Calu3 (cell line): ENCODE measurements at regions of chr12 and their contacts with region 1.

Region 1: DNA sequence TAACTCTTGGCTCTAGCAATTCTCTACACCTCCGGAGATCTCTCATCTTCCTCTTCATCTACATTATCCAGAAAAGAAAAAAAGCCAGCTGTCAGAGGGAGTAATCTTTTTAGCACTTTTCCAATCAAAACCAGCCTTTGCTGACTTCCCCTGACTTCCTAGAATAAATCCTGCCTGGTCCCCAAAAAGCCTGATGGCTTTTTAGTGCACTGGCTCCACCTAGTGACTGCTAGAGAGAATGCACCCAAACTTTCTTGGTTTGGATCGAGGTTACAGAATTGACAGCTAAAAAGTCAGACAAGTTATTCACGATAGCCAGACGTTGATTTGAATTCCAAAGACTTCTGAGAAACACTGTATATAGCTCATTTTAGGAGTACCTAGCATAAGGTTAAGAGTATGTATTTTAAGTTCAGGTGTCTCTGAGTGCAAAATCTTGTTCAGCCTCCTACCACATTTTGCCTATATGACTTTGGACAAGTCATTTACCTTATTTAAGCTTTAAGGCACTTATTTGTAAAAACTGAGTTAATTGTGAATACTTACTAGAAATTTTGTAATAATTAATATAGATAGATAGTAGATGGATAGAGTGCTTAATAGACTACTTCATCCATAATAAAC is 185.7 kb upstream of the GRIN2B start:
- DNase-seq: peak; percentile 58
- H3K4me3 Mint-ChIP-seq: no peak overlapping the region
- H3K27ac Mint-ChIP-seq: no peak overlapping the region
- H3K4me1 Mint-ChIP-seq: no peaks in the 10 kb centered on the region
- H3K27me3 Mint-ChIP-seq: peaks cover 31% of the 10 kb centered on the region
- CTCF ChIP-seq: peak; percentile 85

Region 2: DNA sequence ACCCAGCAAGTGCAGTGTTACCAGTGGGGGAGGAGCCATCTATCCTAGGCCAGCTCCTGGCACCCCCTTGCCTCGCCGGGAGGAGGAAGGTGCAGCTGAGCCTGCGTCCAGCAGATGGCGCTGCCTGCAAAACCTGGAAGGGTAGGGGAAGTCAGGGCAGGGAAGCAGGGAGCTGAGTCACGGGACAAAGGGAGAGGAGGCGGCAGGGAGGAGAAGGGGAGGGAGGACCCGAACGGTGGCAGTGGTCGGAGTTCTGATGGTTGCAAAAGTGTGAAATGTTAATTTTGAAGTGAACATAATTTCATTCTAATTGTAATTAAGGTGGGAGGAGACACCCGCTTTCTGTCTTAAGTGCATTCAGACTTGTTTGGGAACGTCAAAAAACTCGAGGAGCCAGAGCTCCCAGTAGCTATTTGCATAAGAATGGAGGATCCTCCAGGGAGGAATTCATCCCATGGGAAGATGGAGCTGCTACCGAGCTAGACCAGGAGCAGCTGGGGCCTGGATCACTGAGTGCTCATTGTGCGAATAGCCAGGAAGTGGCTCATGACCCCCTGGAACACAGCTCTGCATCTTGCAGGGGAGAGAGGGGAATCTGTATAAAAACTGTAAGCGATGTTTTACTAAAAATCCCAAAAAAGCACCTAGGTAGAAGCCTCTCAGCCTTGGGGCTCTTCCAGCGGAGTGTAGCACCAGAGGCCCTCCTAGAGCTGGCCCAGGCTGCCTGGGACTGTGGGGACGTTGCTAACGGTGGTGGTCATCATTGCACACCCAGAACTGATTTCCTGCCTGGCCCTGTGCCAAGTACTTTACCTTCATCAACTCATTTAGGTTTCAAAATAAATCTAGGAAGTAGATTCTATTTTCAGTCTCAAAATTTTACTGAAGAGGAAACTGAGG is 911.1 kb before region 1 on chr12:
- CTCF ChIA-PET with region 1: interaction called, 4 read pairs
- intact Hi-C with region 1: loop called (anchors 5 kb)
- DNase-seq: peak; percentile 94
- H3K4me3 Mint-ChIP-seq: peak overlapping the region; percentile 53
- H3K27ac Mint-ChIP-seq: peak overlapping the region; percentile 16
- H3K4me1 Mint-ChIP-seq: peaks cover 11% of the 10 kb centered on the region
- H3K27me3 Mint-ChIP-seq: no peaks in the 10 kb centered on the region
- CTCF ChIP-seq: peak; percentile 86

Region 3: DNA sequence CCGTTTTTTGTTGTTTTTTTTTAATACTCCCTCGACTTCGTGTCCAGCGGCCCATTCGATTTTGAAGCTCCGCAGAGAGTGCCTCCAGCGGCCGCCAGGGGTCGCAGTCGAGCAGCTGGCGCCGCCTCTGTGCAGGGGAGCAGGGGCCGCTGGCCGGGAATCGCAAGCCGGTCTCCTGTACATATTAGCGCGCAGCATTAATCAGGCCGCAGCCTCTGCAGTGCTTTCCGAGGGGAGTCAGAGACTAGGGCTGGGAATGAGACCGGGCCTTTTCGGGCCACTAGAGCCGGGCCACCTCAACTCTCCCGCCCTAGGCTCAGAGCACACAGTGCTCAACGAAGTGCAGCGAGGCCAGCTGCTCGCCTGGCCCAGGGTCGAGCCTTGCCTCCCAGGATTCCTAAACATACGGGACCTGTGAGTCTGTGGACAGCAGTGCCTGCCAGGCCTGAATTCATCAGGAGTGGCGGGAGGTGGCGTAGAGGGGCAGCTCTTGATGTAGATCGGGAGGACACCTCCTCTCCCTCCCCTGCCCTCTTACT is 888.8 kb before region 1 on chr12:
- CTCF ChIA-PET with region 1: no interaction called
- intact Hi-C with region 1: loop called (anchors 5 kb)
- DNase-seq: peak; percentile 84
- H3K4me3 Mint-ChIP-seq: no peak overlapping the region
- H3K27ac Mint-ChIP-seq: no peak overlapping the region
- H3K4me1 Mint-ChIP-seq: no peaks in the 10 kb centered on the region
- H3K27me3 Mint-ChIP-seq: peaks cover 30% of the 10 kb centered on the region
- CTCF ChIP-seq: peak; percentile 93

Region 4: GRCh38 chr12:13744561-13744960 is 422.6 kb before region 1 on chr12:
- CTCF ChIA-PET with region 1: no interaction called
- intact Hi-C with region 1: loop called (anchors 5 kb)
- DNase-seq: no peak
- H3K4me3 Mint-ChIP-seq: no peak overlapping the region
- H3K27ac Mint-ChIP-seq: no peak overlapping the region
- H3K4me1 Mint-ChIP-seq: no peaks in the 10 kb centered on the region
- H3K27me3 Mint-ChIP-seq: peaks cover 28% of the 10 kb centered on the region
- CTCF ChIP-seq: no peak

Region 5: DNA sequence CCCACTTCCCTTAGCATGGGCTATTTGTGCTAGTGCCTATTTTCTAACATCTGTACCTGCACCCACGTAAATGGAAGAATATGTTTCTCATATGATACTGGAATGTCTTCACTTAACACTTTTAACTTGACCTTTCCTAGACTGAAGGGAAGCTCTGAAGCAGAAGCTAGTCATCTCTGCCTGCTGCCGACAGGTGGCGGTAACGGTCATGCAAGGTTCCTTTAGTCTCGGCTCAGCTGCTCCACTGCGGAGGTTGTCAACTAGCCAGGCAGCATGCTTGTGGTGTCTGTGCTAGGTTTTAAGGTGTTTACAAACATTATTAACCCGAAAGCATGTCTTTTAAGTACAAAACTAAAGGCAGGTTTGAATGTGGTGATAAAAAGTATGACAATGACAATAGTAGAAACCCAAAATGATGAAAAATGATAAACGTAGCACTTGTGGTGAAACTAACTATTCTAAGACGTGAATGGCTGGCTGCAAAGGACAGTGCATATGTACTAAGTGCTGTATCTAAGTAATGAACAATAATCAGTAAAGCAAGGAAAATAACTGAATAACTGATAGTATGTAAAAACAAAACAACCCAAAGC is 302.9 kb before region 1 on chr12:
- CTCF ChIA-PET with region 1: interaction called, 4 read pairs
- intact Hi-C with region 1: loop called (anchors 5 kb)
- DNase-seq: peak; percentile 77
- H3K4me3 Mint-ChIP-seq: no peak overlapping the region
- H3K27ac Mint-ChIP-seq: no peak overlapping the region
- H3K4me1 Mint-ChIP-seq: no peaks in the 10 kb centered on the region
- H3K27me3 Mint-ChIP-seq: peaks cover 84% of the 10 kb centered on the region
- CTCF ChIP-seq: peak; percentile 81

Region 6: DNA sequence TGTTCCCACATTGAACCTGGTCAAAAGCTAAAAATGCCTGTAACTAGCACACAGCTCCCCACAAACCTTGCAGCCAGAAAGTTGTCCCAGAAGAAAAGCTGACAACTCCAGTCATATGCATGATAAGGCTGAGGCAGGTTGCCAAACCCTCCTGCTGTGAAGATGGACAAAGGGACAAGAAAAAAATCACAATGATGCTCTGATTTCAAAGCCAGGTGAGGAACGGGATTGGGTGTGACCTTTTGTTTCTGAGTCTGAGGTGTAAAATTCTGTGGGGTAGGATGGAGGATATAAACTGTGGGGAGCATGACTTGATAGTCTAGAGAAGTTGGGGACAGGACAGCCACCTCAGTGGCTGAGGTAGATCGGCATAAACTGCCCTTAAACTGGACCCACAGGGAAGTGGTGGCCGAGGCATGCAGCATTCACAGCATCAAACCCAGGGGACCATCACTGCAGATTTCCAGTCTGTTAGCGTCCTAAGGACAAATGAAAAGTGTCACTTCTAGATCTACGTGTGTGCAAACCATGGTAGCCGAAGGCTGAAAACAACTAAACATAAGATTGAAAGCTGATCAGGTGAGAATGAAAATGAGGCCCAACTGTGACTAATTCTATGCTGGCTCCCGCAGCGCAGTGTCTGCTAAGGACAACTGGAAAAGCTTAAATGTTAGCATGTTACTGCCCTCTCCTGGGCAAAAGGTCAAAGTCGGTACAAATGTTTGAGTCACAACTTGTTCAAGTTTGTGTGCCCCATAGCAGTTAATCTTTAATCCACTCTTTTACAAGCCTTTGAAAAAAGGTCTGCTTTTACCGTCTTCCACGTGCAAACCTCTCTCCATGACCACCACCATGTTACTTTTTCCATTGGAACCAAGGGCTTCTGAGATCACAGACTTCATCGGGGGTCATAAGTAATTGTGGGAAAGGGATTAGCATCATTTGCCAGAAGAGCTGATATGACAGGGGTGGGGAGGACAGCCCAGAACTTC is 225.6 kb before region 1 on chr12:
- CTCF ChIA-PET with region 1: no interaction called
- intact Hi-C with region 1: loop called (anchors 10 kb)
- DNase-seq: peak; percentile 73
- H3K4me3 Mint-ChIP-seq: no peak overlapping the region
- H3K27ac Mint-ChIP-seq: peak overlapping the region; percentile 13
- H3K4me1 Mint-ChIP-seq: peaks cover 14% of the 10 kb centered on the region
- H3K27me3 Mint-ChIP-seq: no peaks in the 10 kb centered on the region
- CTCF ChIP-seq: peak; percentile 17

Region 7: GRCh38 chr12:13959131-13959723 is 207.9 kb before region 1 on chr12:
- CTCF ChIA-PET with region 1: no interaction called
- intact Hi-C with region 1: no loop called
- DNase-seq: no peak
- H3K4me3 Mint-ChIP-seq: no peak overlapping the region
- H3K27ac Mint-ChIP-seq: no peak overlapping the region
- H3K4me1 Mint-ChIP-seq: peaks cover 7% of the 10 kb centered on the region
- H3K27me3 Mint-ChIP-seq: peaks cover 91% of the 10 kb centered on the region
- CTCF ChIP-seq: no peak

Region 8: GRCh38 chr12:14111230-14111865 is 55.8 kb before region 1 on chr12:
- CTCF ChIA-PET with region 1: no interaction called
- intact Hi-C with region 1: loop called (anchors 2 kb)
- DNase-seq: peak; percentile 35
- H3K4me3 Mint-ChIP-seq: no peak overlapping the region
- H3K27ac Mint-ChIP-seq: no peak overlapping the region
- H3K4me1 Mint-ChIP-seq: no peaks in the 10 kb centered on the region
- H3K27me3 Mint-ChIP-seq: peaks cover 62% of the 10 kb centered on the region
- CTCF ChIP-seq: peak; percentile 36